Activated naive CD8-positive, alpha-beta T cell treated with anti-CD3 and anti-CD28 coated beads, Interleukin-2, amount 10 ng/mL, durations not matched to agents 7 days and 5 days (primary cell): ENCODE measurements at regions of chr3 and their contacts with region 1.

Region 1: DNA sequence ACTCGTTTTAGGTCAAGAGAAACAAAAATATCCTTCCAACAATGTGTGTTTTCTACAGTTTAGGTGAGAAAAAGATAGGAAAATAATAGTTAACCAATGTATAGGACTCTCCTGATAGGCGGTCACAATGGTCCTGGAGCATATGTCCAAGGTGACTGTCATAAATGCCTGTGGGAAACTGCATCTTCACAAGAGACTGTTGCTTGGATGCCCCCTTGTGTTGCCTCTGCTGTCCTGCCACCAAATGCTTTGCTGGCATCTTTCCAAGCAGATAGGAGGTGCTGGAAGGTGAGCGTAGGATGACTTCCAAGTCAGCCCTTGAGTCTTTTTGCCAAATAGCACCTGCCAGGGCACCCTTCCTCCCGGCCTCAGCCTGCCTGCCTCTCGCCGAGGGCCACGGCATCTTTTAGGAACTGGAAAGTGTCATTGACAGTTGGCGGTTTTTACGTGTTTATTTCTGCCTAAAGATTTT is 24.1 kb upstream of the SACM1L start:
- DNase-seq: peak; percentile 53
- ATAC-seq: peak; percentile 46
- H3K4me3 Mint-ChIP-seq: peak overlapping the region; percentile 91
- H3K27ac Mint-ChIP-seq: peak overlapping the region; percentile 94
- H3K4me1 Mint-ChIP-seq: peaks cover 35% of the 10 kb centered on the region
- H3K27me3 Mint-ChIP-seq: no peaks in the 10 kb centered on the region

Region 2: GRCh38 chr3:45623393-45623792 is 41.7 kb before region 1 on chr3:
- POLR2A ChIA-PET with region 1: no interaction called
- DNase-seq: no peak
- ATAC-seq: no peak
- H3K4me3 Mint-ChIP-seq: no peak overlapping the region
- H3K27ac Mint-ChIP-seq: no peak overlapping the region
- H3K4me1 Mint-ChIP-seq: no peaks in the 10 kb centered on the region
- H3K27me3 Mint-ChIP-seq: no peaks in the 10 kb centered on the region

Region 3: GRCh38 chr3:45677033-45677433 is 11.9 kb after region 1 on chr3:
- POLR2A ChIA-PET with region 1: interaction called, 16 read pairs
- DNase-seq: peak; percentile 70
- ATAC-seq: peak; percentile 98
- H3K4me3 Mint-ChIP-seq: peak overlapping the region; percentile 83
- H3K27ac Mint-ChIP-seq: peak overlapping the region; percentile 98
- H3K4me1 Mint-ChIP-seq: peaks cover 23% of the 10 kb centered on the region
- H3K27me3 Mint-ChIP-seq: no peaks in the 10 kb centered on the region

Region 4: GRCh38 chr3:45852828-45853227 is 187.7 kb after region 1 on chr3:
- POLR2A ChIA-PET with region 1: no interaction called
- DNase-seq: no peak
- ATAC-seq: no peak
- H3K4me3 Mint-ChIP-seq: no peak overlapping the region
- H3K27ac Mint-ChIP-seq: no peak overlapping the region
- H3K4me1 Mint-ChIP-seq: peaks cover 10% of the 10 kb centered on the region
- H3K27me3 Mint-ChIP-seq: peaks cover 59% of the 10 kb centered on the region